Activated T-helper 1 cell treated with anti-CD3 and anti-CD28 coated beads, Interleukin-12 subunit alpha, Interleukin-12 subunit beta, Interleukin-2, Interleukin-4 antibody, amounts not matched to agents 30 ng/mL and 10 ng/mL and 1 ng/mL, durations not matched to agents 14 hours and 24 hours and 36 hours (primary cell): ENCODE measurements at regions of chr7 and their contacts with region 1.

Region 1: DNA sequence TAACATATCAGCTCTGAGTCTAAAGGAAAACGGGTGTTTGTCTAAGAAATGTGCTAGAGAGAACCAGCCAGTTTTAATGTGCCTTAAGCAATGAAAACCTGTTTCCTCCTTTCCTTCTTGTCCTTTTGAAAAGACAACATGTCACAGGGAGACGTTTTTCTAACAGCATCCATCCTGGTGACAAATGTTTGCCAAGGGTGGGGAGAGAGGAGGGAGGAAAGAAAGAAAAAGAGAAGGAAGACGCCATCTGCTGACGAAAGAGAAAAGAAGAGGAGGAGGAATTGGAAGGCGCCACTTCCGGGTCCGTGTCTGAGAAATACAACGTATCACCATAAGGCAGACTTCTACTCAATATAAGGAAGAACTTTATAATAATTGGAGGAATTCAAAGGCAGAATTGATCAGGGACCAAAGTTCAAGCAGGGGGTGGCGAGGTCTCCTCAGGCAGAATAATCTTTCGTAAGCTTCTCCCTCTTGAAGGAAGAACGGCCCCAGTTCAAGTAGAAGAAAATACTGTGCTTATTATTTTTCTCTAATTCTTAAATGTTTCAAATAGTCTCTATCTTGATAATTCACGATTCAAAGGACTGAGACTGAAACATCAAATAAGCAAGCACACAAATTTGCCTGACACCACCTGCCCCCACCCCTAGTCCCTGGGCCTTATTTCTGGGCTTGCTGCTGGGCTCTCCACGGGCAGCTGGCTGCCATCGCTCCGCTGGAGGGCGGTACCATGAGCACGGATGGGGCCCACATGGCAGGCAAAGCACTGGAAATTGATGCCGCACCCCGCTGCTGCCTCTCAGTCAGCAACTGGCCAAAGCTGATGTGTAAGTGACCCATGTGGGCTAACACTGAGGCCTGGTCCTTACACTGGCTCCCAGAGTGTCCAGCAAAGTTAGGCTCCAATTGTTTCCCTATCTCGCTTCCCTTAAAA is 273.7 kb upstream of the KLF14 start:
- DNase-seq: peak; percentile 53
- H3K4me3 Mint-ChIP-seq: peak overlapping the region; percentile 68
- H3K27ac Mint-ChIP-seq: peak overlapping the region; percentile 89
- H3K4me1 Mint-ChIP-seq: peaks cover 75% of the 10 kb centered on the region
- H3K27me3 Mint-ChIP-seq: no peaks in the 10 kb centered on the region

Region 2: DNA sequence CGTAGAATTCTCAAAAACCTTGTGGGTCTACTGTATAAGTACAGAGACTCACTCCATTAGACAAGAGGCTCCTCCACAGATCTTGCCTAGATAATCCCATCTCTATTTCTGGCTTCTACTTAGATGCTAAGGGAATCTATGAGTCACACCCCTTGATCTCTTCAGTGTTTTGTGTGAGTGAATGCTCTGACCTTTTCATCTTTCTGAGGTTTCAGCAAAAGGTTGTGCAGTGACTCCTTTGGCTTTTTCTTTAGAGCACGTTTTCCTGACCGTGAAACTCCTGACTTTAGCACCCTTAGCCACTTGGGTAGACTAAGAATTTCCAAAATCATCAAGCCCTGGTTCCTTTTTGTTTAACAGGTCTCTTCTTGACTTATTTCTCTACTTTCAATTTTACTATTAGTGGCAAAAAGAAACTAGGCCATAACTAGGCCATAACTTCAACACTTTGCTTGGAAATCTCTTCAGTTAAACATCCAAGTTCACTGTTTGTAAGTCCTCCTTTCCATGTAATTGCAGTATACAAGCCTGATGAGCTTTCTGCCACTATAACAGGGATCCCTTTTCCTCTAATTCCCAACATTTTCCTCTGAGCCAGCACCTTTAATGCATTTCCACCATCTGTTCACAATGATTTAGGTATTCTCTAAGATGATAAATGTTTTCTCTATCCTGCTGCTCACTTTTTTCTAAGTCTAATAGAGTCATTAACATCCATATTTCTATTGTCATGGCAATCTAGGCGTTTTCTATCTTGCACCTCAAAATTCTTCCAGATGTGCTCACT is 358.5 kb before region 1 on chr7:
- intact Hi-C with region 1: loop called (anchors 5 kb)
- DNase-seq: peak; percentile 5
- H3K4me3 Mint-ChIP-seq: peak overlapping the region; percentile 54
- H3K27ac Mint-ChIP-seq: peak overlapping the region; percentile 85
- H3K4me1 Mint-ChIP-seq: peaks cover 40% of the 10 kb centered on the region
- H3K27me3 Mint-ChIP-seq: no peaks in the 10 kb centered on the region

Region 3: GRCh38 chr7:130941322-130942210 is 66.1 kb before region 1 on chr7:
- intact Hi-C with region 1: loop called (anchors 1 kb)
- DNase-seq: no peak
- H3K4me3 Mint-ChIP-seq: peak overlapping the region; percentile 65
- H3K27ac Mint-ChIP-seq: peak overlapping the region; percentile 76
- H3K4me1 Mint-ChIP-seq: peaks cover 94% of the 10 kb centered on the region
- H3K27me3 Mint-ChIP-seq: no peaks in the 10 kb centered on the region

Region 4: DNA sequence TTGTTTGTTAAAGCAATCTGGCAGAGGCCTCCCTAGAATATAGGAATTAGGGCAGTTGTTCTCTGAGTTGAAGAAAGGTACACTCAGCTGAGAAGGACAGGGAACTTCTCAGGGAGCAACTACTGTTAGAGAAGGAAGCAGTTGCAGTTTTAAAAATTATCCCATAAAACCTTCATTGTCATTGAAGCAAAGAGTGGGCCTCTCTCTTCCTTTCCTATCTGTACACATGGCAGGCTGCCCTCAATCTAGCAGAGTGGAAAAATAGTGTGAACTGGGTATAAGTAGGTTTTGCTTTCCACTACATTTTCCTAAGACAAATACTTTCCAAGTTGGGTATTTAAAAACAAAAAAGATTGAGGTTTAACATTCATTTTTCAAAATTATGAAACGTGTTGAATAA is 37.0 kb before region 1 on chr7:
- intact Hi-C with region 1: loop called (anchors 1 kb)
- DNase-seq: no peak
- H3K4me3 Mint-ChIP-seq: peak overlapping the region; percentile 37
- H3K27ac Mint-ChIP-seq: peak overlapping the region; percentile 94
- H3K4me1 Mint-ChIP-seq: peaks cover 76% of the 10 kb centered on the region
- H3K27me3 Mint-ChIP-seq: no peaks in the 10 kb centered on the region

Region 5: DNA sequence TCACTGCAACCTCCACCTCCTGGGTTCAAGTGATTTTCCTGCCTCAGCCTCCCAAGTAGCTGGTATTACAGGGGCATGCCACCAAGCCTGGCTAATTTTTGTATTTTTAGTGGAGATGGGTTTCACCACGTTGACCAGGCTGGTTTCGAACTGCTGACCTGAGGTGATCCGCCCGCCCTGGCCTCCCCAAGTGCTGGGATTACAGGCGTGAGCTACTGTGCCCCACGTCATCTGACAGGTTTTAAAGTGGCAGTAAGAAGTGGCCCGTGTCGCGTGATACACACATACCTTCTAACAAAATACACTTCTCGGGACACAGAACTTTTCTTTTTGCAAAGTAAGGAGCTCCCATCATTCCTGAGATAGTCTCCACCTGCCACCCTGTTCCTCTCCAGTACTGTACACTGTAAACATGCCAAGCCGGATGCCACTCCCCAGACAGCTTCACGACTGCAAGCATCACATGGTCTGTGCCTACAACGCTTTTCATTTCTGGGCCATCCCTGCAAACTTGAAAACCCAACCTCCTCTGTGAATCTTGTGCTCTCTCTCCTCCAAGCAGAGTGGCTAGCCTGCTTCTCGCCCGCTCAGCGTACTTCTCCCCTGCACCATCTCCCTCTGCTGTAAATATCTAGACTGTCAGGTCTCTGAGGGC is 17.4 kb before region 1 on chr7:
- intact Hi-C with region 1: no loop called
- DNase-seq: no peak
- H3K4me3 Mint-ChIP-seq: no peak overlapping the region
- H3K27ac Mint-ChIP-seq: peak overlapping the region; percentile 67
- H3K4me1 Mint-ChIP-seq: peaks cover 59% of the 10 kb centered on the region
- H3K27me3 Mint-ChIP-seq: no peaks in the 10 kb centered on the region

Region 6: GRCh38 chr7:131021460-131021859 is 13.8 kb after region 1 on chr7:
- intact Hi-C with region 1: loop called (anchors 1 kb)
- DNase-seq: no peak
- H3K4me3 Mint-ChIP-seq: peak overlapping the region; percentile 5
- H3K27ac Mint-ChIP-seq: peak overlapping the region; percentile 87
- H3K4me1 Mint-ChIP-seq: peaks cover 43% of the 10 kb centered on the region
- H3K27me3 Mint-ChIP-seq: no peaks in the 10 kb centered on the region

Region 7: GRCh38 chr7:131057015-131057793 is 49.5 kb after region 1 on chr7:
- intact Hi-C with region 1: loop called (anchors 1 kb)
- DNase-seq: peak; percentile 47
- H3K4me3 Mint-ChIP-seq: peak overlapping the region; percentile 78
- H3K27ac Mint-ChIP-seq: peak overlapping the region; percentile 80
- H3K4me1 Mint-ChIP-seq: peaks cover 52% of the 10 kb centered on the region
- H3K27me3 Mint-ChIP-seq: no peaks in the 10 kb centered on the region